ENCODE measurements at regions of chr18 and their contacts with region 1.

Region 1: DNA sequence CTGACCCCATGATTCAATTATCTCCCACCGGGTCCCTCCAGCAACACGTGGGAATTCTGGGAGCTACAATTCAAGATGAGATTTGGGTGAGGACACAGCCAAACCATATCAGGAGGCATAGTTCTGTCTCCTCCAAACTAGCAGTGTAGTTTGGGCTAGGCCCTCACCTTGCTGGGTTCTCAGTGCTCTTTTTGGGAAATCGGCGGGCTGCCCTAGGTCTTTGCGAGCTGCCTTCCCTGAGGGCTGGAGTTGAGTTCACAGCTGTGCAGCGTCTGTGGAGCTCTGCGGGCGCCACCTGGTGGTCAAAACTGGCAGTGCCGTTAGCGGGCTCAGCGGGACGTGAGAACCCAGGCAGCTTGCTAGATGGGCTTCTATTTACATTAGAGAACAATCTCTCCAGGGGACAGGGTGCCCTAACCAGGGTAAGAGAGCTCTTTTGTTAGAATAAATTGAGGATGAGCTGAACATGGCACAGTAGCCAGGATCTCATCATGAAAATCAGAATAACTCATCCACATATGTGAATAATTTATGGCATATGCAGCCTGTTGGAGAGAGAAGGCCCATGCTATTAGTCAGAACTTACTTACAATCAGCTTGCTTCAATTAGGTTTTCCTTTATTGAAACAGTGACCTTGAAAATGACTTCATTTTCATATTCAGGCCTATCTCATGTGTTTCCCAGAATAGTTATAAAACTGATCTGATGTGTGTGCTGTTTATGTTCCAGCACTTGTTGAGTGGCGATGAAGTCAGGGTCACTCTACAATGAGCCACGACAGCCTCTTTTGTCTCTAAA is 27.4 kb upstream of the YES1 start:
- DNase-seq: peak; percentile 81 to 90 (median 86)
- H3K4me3 ChIP-seq: peak overlapping the region in 1 of 7 experiments; percentile 48
- H3K27ac ChIP-seq: peak overlapping the region in 1 of 2 experiments; percentile 39
- H3K4me1 ChIP-seq: peaks cover 0 to 3% (median 0%) of the 10 kb centered on the region in 4 experiments
- H3K27me3 ChIP-seq: no peaks in the 10 kb centered on the region

Region 2: DNA sequence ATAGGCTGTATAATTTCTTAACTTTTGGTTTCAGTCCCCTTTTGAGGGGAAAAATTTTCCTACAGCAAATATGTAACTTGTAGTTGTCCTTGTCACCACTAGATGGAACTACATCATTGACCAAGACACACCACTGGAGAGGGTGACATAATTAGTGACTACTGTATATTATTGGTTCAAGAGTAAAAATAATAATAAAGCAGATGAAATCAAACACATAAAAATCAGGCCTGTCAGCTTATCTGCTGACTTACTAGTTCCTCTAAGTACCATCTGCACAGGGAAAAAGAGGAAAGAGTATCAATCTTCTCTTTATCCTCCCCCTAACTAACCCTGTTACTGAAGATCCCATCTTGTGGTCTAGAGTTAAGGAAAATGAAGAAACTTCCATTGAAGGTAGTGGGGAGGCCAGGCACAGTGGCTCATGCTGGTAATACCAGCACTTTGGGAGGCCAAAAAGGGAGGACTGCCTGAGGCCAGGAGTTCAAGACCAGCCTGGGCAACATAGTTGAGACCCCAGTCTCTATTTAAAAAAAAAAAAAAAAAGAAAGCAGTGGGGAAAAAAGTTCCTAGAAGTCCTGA is 97.4 kb before region 1 on chr18:
- CTCF ChIA-PET with region 1: interaction called, 179 read pairs
- POLR2A ChIA-PET with region 1: no interaction called
- DNase-seq: peak; percentile 59 to 82 (median 79)
- H3K4me3 ChIP-seq: no peak overlapping the region
- H3K27ac ChIP-seq: no peak overlapping the region
- H3K4me1 ChIP-seq: no peaks in the 10 kb centered on the region
- H3K27me3 ChIP-seq: no peaks in the 10 kb centered on the region

Region 3: GRCh38 chr18:877238-877637 is 37.8 kb after region 1 on chr18:
- CTCF ChIA-PET with region 1: no interaction called
- POLR2A ChIA-PET with region 1: no interaction called
- DNase-seq: no peak
- H3K4me3 ChIP-seq: no peak overlapping the region
- H3K27ac ChIP-seq: no peak overlapping the region
- H3K4me1 ChIP-seq: peaks cover 0 to 6% (median 0%) of the 10 kb centered on the region in 4 experiments
- H3K27me3 ChIP-seq: no peaks in the 10 kb centered on the region

Region 4: GRCh38 chr18:923141-923866 is 83.9 kb after region 1 on chr18:
- CTCF ChIA-PET with region 1: no interaction called
- POLR2A ChIA-PET with region 1: no interaction called
- DNase-seq: no peak
- H3K4me3 ChIP-seq: no peak overlapping the region
- H3K27ac ChIP-seq: no peak overlapping the region
- H3K4me1 ChIP-seq: peaks cover 0 to 2% (median 0%) of the 10 kb centered on the region in 4 experiments
- H3K27me3 ChIP-seq: peaks cover 0 to 6% (median 5%) of the 10 kb centered on the region in 5 experiments